Activated naive CD8-positive, alpha-beta T cell treated with anti-CD3 and anti-CD28 coated beads, Interleukin-2, amount 10 ng/mL, durations not matched to agents 7 days and 5 days (primary cell): ENCODE measurements at regions of chr1 and their contacts with region 1.

Region 1: GRCh38 chr1:25022361-25023189 is 92.5 kb upstream of the RUNX3 start:
- DNase-seq: peak; percentile 90
- ATAC-seq: peak; percentile 92
- H3K4me3 Mint-ChIP-seq: peak overlapping the region; percentile 83
- H3K27ac Mint-ChIP-seq: peak overlapping the region; percentile 97
- H3K4me1 Mint-ChIP-seq: peaks cover 82% of the 10 kb centered on the region
- H3K27me3 Mint-ChIP-seq: no peaks in the 10 kb centered on the region

Region 2: DNA sequence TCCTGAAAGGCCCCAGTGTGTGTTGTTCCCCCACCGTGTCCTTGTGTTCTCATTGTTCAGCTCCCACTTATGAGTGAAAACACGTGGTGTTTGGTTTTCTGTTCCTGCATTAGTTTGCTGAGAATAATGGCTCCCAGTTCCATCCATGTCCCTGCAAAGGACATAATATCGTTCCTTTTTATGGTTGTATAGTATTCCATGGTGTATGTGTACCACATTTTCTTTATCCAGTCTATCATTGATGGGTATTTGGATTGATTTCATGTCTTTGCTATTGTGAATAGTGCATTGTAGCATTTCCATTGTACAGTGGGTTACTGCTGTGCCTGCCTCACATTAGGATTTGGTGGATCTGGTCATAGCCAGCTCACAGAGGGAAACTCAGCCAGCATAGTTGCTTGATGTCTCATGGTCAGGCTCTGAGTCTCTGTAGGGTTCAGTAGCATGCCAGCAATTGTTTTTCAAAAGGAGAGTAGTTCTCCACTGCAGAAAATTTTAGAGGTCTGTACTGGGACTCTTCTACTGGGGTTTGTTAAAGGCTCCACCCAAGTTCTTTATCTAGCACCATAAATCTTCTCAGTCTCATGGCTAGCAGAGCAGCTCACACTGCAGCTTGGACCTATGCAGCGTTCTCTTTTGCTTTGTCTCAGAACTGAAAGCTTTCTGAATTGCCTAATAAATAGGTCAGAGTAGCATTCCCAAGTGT is 133.5 kb before region 1 on chr1:
- POLR2A ChIA-PET with region 1: no interaction called
- DNase-seq: no peak
- ATAC-seq: no peak
- H3K4me3 Mint-ChIP-seq: no peak overlapping the region
- H3K27ac Mint-ChIP-seq: no peak overlapping the region
- H3K4me1 Mint-ChIP-seq: no peaks in the 10 kb centered on the region
- H3K27me3 Mint-ChIP-seq: peaks cover 20% of the 10 kb centered on the region

Region 3: GRCh38 chr1:24970399-24970753 is 52.2 kb before region 1 on chr1:
- POLR2A ChIA-PET with region 1: interaction called, 215 read pairs
- DNase-seq: no peak
- ATAC-seq: no peak
- H3K4me3 Mint-ChIP-seq: peak overlapping the region; percentile 85
- H3K27ac Mint-ChIP-seq: peak overlapping the region; percentile 91
- H3K4me1 Mint-ChIP-seq: peaks cover 79% of the 10 kb centered on the region
- H3K27me3 Mint-ChIP-seq: no peaks in the 10 kb centered on the region

Region 4: GRCh38 chr1:24996983-24997893 is 25.3 kb before region 1 on chr1:
- POLR2A ChIA-PET with region 1: interaction called, 70 read pairs
- DNase-seq: peak; percentile 85
- ATAC-seq: peak; percentile 77
- H3K4me3 Mint-ChIP-seq: peak overlapping the region; percentile 73
- H3K27ac Mint-ChIP-seq: peak overlapping the region; percentile 98
- H3K4me1 Mint-ChIP-seq: peaks cover 85% of the 10 kb centered on the region
- H3K27me3 Mint-ChIP-seq: no peaks in the 10 kb centered on the region

Region 5: DNA sequence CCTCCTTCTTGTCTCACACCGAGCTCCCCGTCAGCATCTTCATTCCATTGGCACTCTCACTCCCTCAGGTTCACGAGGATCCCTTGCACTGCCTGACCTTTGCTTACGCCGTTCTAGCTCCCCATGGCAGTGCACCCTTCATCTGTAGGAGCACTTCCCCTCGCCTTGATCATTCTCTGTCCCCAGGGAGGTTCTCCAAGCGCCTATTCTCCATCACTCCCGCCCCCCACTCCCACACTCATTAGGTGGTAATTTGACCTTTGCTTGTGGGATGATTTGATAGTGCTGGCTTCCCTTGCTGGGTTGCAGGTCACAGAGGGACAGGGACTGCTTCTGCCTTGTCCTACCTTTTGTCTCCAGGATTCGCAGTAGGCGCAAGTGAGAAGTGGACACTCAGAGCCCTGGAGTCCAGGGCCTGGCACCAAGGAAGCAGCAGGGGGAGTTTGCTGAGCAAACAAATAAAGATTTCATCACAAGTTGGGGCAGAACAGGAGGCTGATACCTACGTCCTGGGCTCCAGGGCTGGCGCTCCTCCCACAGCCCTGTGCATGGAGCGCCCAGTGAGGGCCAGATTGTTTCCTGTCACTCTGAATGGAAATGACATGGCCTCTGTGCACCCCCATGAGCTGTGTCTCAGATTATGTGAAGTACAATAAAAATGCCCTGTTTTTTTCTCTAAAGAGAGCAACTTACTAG is 10.5 kb before region 1 on chr1:
- POLR2A ChIA-PET with region 1: interaction called, 23 read pairs
- DNase-seq: no peak
- ATAC-seq: peak; percentile 59
- H3K4me3 Mint-ChIP-seq: no peak overlapping the region
- H3K27ac Mint-ChIP-seq: peak overlapping the region; percentile 69
- H3K4me1 Mint-ChIP-seq: peaks cover 45% of the 10 kb centered on the region
- H3K27me3 Mint-ChIP-seq: no peaks in the 10 kb centered on the region